HCT116 (cell line): ENCODE measurements at regions of chr20 and their contacts with region 1.

Region 1: GRCh38 chr20:381581-382290 is 1.2 kb downstream of the TRIB3 start:
- DNase-seq: peak; percentile 61
- ATAC-seq: peak; percentile 70
- H3K4me3 ChIP-seq: peak overlapping the region; percentile 82 to 89
- H3K27ac ChIP-seq: peak overlapping the region; percentile 87
- H3K4me1 ChIP-seq: peaks cover 30 to 32% of the 10 kb centered on the region in 2 experiments
- H3K27me3 ChIP-seq: no peaks in the 10 kb centered on the region
- CTCF ChIP-seq: no peak
- POLR2A ChIP-seq: no peak
- RAD21 ChIP-seq: no peak

Region 2: DNA sequence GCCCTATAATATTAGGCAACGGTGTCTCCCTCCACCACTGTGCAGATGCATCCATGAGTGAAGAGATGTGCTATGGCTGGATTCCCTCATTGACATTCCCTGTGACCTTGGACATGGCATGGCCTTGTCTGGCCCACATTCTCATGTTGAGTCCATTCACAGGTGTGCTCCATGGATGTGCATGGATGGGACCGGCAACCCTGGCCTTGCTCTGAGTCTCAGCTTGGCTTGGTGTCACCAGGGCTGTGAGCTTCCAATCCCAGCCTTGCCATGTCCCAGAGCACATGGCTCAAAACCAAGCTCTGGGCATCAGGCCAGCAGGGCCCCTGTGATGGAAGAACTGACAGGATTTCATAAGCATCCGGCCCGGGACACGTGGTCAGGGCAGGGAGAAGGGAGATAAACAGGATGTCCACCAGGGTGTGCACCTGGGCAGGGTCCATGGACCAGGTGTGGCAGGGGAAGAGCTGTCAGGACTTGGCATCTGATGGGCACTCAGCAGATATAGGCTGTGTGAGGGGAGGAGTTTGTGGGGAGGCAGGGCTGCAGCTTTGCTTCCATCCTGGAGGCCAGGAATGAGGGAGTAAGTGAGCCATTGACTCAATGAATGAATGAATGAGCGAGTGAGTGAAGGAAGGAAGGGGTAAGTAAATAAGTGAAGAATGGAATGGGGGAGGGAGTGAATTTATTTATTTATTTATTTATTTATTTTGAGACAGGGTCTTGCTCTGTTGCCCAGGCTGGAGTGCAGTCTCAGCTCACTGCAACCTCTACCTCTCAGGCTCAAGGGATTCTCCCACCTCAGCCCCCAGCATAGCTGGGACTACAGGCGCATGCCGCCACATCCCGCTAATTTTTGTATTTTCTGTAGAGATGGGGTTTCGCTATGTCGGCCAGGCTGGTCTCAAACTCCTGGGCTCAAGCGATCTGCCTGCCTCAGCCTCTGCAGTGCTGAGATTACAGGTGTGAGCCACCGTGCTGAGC is 19.2 kb before region 1 on chr20:
- CTCF ChIA-PET with region 1: interaction called, 11 read pairs
- POLR2A ChIA-PET with region 1: interaction called, 779 read pairs
- RAD21 ChIA-PET with region 1: interaction called, 6 read pairs
- intact Hi-C with region 1: loop called (anchors 1 kb)
- DNase-seq: peak; percentile 95
- ATAC-seq: peak; percentile 87
- H3K4me3 ChIP-seq: no peak overlapping the region
- H3K27ac ChIP-seq: peak overlapping the region; percentile 58
- H3K4me1 ChIP-seq: peaks cover 53 to 59% of the 10 kb centered on the region in 2 experiments
- H3K27me3 ChIP-seq: no peaks in the 10 kb centered on the region
- CTCF ChIP-seq: peak in 2 of 3 experiments; percentile 66; a peak in 4 of 6 replicates
- POLR2A ChIP-seq: no peak
- RAD21 ChIP-seq: no peak

Region 3: GRCh38 chr20:401682-402495 is 20.2 kb after region 1 on chr20:
- CTCF ChIA-PET with region 1: no interaction called
- POLR2A ChIA-PET with region 1: interaction called, 639 read pairs
- RAD21 ChIA-PET with region 1: interaction called in 1 of 2 experiments, 4 read pairs
- intact Hi-C with region 1: loop called (anchors 2 kb)
- DNase-seq: peak; percentile 94
- ATAC-seq: peak; percentile 69
- H3K4me3 ChIP-seq: no peak overlapping the region
- H3K27ac ChIP-seq: peak overlapping the region; percentile 18; the same call in 1 of the 2 replicates
- H3K4me1 ChIP-seq: peaks cover 20 to 35% of the 10 kb centered on the region in 2 experiments
- H3K27me3 ChIP-seq: no peaks in the 10 kb centered on the region
- CTCF ChIP-seq: no peak
- POLR2A ChIP-seq: no peak
- RAD21 ChIP-seq: no peak; the same call in 1 of the 2 replicates

Region 4: GRCh38 chr20:407133-407952 is 25.6 kb after region 1 on chr20:
- CTCF ChIA-PET with region 1: no interaction called
- POLR2A ChIA-PET with region 1: interaction called, 639 read pairs
- RAD21 ChIA-PET with region 1: interaction called in 1 of 2 experiments, 3 read pairs
- intact Hi-C with region 1: loop called (anchors 2 kb)
- DNase-seq: peak; percentile 51
- ATAC-seq: peak; percentile 87
- H3K4me3 ChIP-seq: peak overlapping the region; percentile 51 to 55
- H3K27ac ChIP-seq: peak overlapping the region; percentile 86
- H3K4me1 ChIP-seq: peaks cover 9 to 32% of the 10 kb centered on the region in 2 experiments; a peak in 3 of 4 replicates
- H3K27me3 ChIP-seq: no peaks in the 10 kb centered on the region
- CTCF ChIP-seq: peak in 2 of 3 experiments; percentile 36 to 51; a peak in 3 of 6 replicates
- POLR2A ChIP-seq: peak; percentile 76
- RAD21 ChIP-seq: no peak

Region 5: DNA sequence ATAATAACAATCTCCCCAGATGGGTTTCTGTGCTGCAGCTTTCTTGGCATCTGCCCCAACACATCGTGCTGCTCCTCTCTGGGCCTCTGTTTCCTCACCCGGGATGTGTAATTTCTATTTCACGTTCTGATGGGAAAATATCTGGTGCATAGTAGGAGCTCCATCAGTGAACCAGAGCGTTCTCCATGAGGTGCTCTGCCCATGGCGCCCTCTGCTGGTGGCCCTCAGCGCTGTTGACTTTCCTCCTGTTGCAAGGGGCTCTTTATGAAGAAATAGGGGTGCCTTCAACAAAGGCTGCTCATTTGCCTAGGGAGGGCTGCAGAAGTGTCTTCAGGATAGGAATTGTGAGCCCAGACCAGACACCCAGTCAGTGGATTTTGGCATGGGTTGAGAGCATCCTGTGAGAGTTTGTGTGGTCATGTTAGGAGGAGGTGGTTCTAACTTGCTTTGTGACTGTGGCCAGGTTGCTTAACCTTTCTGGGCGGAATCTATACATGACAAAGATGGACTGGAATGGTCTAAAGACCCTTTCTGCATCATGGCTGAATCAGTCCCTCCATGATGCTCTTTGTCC is 285.7 kb after region 1 on chr20:
- CTCF ChIA-PET with region 1: no interaction called
- POLR2A ChIA-PET with region 1: no interaction called
- RAD21 ChIA-PET with region 1: no interaction called
- intact Hi-C with region 1: no loop called
- DNase-seq: no peak
- ATAC-seq: peak; percentile 87
- H3K4me3 ChIP-seq: no peak overlapping the region
- H3K27ac ChIP-seq: no peak overlapping the region
- H3K4me1 ChIP-seq: peaks cover 9 to 10% of the 10 kb centered on the region in 2 experiments; a peak in 3 of 4 replicates
- H3K27me3 ChIP-seq: no peaks in the 10 kb centered on the region
- CTCF ChIP-seq: peak; percentile 89 to 99 (median 97)
- POLR2A ChIP-seq: no peak
- RAD21 ChIP-seq: peak; percentile 68